Ovary (tissue), 10 donors: ENCODE measurements at regions of chr6 and their contacts with region 1.

Region 1: DNA sequence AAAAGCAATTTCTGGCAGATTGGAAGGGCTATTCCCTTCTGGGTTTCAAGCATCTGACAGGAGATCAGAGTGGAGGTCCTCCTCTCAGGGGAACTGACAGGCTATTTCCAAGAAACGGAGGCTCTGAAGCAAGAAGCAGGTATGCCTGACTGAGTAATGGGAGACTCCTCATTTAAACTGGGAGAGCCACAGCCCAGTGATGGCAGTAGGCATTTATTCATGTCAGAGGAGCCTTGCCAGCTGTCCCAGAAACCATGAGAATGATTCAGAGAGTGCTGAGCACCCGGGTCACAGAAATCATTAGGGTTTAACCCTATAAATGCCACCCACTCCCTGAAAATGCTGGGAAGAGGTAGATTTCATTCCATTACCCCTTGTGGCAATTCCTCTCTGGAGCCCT is 247.5 kb upstream of the RNF217 start:
- DNase-seq: no peak
- H3K4me3 ChIP-seq: no peak overlapping the region
- H3K27ac ChIP-seq: no peak overlapping the region
- H3K4me1 ChIP-seq: no peaks in the 10 kb centered on the region
- H3K27me3 ChIP-seq: no peaks in the 10 kb centered on the region
- CTCF ChIP-seq: no peak
- EP300 ChIP-seq: no peak
- POLR2A ChIP-seq: no peak

Region 2: DNA sequence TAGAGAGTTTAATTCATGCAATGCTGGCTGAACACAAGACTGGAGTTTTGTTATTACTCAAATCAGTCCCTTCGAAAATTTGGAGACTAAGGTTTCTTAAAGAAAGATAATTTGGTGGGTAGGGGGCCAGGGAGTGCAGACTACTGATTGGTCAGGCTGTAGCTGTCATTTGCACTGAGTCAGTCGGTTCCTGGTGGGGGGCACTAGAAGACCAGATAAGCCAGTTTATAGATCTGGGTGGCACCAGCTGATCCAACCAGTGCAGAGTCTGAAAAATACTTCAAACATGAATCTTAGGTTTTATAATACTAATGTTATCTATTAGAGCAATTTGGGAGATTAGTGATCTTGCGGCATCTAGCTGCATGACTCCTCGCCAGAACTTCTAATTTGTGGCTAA is 380.4 kb before region 1 on chr6:
- intact Hi-C with region 1: loop called in 1 of 4 experiments (anchors 5 kb)
- DNase-seq: no peak
- H3K4me3 ChIP-seq: no peak overlapping the region
- H3K27ac ChIP-seq: no peak overlapping the region
- H3K4me1 ChIP-seq: no peaks in the 10 kb centered on the region
- H3K27me3 ChIP-seq: no peaks in the 10 kb centered on the region
- CTCF ChIP-seq: no peak
- EP300 ChIP-seq: no peak
- POLR2A ChIP-seq: no peak

Region 3: GRCh38 chr6:124765280-124765679 is 50.6 kb after region 1 on chr6:
- intact Hi-C with region 1: no loop called
- DNase-seq: no peak
- H3K4me3 ChIP-seq: no peak overlapping the region
- H3K27ac ChIP-seq: no peak overlapping the region
- H3K4me1 ChIP-seq: no peaks in the 10 kb centered on the region
- H3K27me3 ChIP-seq: no peaks in the 10 kb centered on the region
- CTCF ChIP-seq: no peak
- EP300 ChIP-seq: no peak
- POLR2A ChIP-seq: no peak

Region 4: GRCh38 chr6:125213939-125214338 is 499.2 kb after region 1 on chr6:
- intact Hi-C with region 1: no loop called
- DNase-seq: no peak
- H3K4me3 ChIP-seq: no peak overlapping the region
- H3K27ac ChIP-seq: no peak overlapping the region
- H3K4me1 ChIP-seq: no peaks in the 10 kb centered on the region
- H3K27me3 ChIP-seq: no peaks in the 10 kb centered on the region
- CTCF ChIP-seq: no peak
- EP300 ChIP-seq: no peak
- POLR2A ChIP-seq: no peak